GM13977 (cell line): ENCODE measurements at regions of chr7 and their contacts with region 1.

Region 1: DNA sequence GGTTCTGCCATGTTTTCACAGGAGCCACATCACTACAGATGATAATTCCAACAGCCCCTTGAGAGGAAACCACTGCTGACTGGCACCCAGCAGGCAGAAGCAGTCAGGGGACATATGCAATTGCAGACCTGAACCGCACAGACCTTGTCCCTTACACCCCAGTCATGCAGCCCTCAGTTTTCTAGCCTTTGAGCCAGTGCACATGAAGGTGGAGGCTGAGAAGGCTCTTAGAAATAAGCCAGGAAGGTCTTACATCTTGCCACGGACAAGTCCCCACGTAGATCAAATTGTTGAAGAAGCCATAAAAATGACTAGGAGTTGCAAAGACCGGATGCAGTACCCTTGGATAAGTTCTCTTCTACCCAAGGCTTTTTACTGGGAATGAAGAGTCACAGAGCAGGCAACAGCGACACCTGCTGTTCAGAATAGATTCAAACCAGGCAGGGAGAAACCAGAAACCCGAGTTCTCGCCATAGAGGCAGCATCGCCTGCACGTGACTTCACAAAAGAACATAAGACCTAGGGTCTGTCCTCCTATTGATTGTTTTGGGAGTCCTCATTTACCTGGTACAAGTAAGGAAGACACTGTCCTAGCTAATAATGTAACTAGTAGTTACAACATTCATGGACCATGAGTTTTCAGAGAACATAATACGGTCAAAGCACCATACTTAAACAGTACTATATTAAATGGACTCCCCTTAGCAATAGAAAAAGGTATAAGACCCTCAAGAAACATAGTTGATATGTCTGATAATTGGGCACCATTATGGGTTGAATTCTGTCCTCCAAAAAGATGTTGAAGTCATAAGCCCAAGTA is 11.1 kb downstream of the STEAP1B start:
- DNase-seq: peak; percentile 68
- CTCF ChIP-seq: peak; percentile 77

Region 2: GRCh38 chr7:22109761-22110160 is 379.1 kb before region 1 on chr7:
- in situ Hi-C with region 1: loop called (anchors 5 kb)
- DNase-seq: no peak
- CTCF ChIP-seq: peak; percentile 54

Region 3: DNA sequence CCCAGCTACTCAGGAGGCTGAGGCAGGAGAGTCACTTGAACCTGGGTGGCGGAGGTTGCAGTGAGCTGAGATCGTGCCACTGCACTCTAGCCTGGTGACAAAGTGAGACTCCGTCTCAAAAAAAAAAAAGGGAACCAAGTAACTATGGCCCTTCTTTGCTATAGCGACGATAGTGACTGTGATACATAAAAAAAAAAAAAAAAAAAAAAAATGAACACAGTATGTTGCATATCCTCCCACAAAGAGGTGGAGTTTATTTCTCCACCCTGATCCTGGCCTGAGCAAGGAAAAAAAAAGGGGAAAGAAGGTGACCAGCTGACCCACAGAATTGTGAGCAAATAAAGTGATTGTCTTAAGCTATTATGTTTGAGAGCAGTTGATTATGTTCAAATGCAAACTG is 53.4 kb after region 1 on chr7:
- in situ Hi-C with region 1: no loop called
- DNase-seq: no peak
- CTCF ChIP-seq: no peak